ENCODE measurements at regions of chr4 and their contacts with region 1.

Region 1: GRCh38 chr4:140359562-140360427 is 13.7 kb upstream of the SCOC start:
- DNase-seq: peak; percentile 27
- ATAC-seq: peak; percentile 91
- H3K4me3 Mint-ChIP-seq: no peak overlapping the region
- H3K27ac Mint-ChIP-seq: no peak overlapping the region
- H3K4me1 Mint-ChIP-seq: no peaks in the 10 kb centered on the region
- H3K27me3 Mint-ChIP-seq: peaks cover 12% of the 10 kb centered on the region
- CTCF ChIP-seq: peak; percentile 93

Region 2: GRCh38 chr4:139484783-139485318 is 874.9 kb before region 1 on chr4:
- CTCF ChIA-PET with region 1: no interaction called
- POLR2A ChIA-PET with region 1: no interaction called
- intact Hi-C with region 1: no loop called
- DNase-seq: no peak
- ATAC-seq: no peak
- H3K4me3 Mint-ChIP-seq: no peak overlapping the region
- H3K27ac Mint-ChIP-seq: no peak overlapping the region
- H3K4me1 Mint-ChIP-seq: no peaks in the 10 kb centered on the region
- H3K27me3 Mint-ChIP-seq: no peaks in the 10 kb centered on the region
- CTCF ChIP-seq: no peak

Region 3: GRCh38 chr4:139734875-139735380 is 624.9 kb before region 1 on chr4:
- CTCF ChIA-PET with region 1: interaction called, 8 read pairs
- POLR2A ChIA-PET with region 1: no interaction called
- intact Hi-C with region 1: loop called (anchors 1 kb)
- DNase-seq: peak; percentile 66
- ATAC-seq: peak; percentile 87
- H3K4me3 Mint-ChIP-seq: peak overlapping the region; percentile 76
- H3K27ac Mint-ChIP-seq: no peak overlapping the region
- H3K4me1 Mint-ChIP-seq: peaks cover 15% of the 10 kb centered on the region
- H3K27me3 Mint-ChIP-seq: peaks cover 13% of the 10 kb centered on the region
- CTCF ChIP-seq: no peak

Region 4: GRCh38 chr4:140252742-140253555 is 106.8 kb before region 1 on chr4:
- CTCF ChIA-PET with region 1: interaction called, 10 read pairs
- POLR2A ChIA-PET with region 1: no interaction called
- intact Hi-C with region 1: no loop called
- DNase-seq: peak; percentile 67
- ATAC-seq: peak; percentile 83
- H3K4me3 Mint-ChIP-seq: peak overlapping the region; percentile 72
- H3K27ac Mint-ChIP-seq: no peak overlapping the region
- H3K4me1 Mint-ChIP-seq: peaks cover 8% of the 10 kb centered on the region
- H3K27me3 Mint-ChIP-seq: peaks cover 25% of the 10 kb centered on the region
- CTCF ChIP-seq: peak; percentile 82

Region 5: DNA sequence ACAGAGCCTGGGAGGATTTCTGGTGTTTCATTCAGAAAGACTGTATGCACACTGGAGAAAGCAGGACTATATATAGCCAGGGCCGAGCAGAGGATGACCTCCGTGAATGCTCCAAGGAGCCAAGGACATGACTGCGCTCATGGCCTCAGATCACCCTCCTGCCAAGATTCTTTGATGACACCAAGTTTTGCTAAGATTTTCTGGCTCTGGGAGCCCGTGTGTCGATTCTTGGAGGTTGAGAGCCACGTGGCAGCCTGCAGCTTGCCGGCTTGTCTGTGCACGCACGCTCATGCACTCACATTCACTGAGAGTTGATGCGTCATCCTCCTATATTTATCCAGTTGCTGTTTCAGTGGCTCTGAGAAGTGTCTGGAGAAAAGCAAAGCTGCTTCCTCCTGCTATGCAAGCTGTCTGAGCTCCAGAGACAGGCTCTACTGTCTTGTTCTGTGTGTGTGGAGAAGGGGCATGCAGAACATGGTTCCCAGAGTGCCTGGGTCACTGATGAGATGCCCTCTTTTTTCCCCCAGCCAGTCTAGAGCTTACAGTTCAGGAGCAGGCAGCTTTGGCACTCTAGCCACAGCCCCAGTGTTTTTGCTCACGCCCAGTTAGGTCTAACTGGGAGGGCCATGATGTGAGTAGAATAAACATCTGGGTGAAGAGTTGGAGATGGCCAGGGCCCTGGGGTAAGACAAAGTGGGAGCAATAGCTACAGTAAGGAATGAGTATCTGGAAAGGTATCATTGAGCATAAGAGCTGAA is 51.2 kb before region 1 on chr4:
- CTCF ChIA-PET with region 1: no interaction called
- POLR2A ChIA-PET with region 1: no interaction called
- intact Hi-C with region 1: no loop called
- DNase-seq: no peak
- ATAC-seq: no peak
- H3K4me3 Mint-ChIP-seq: no peak overlapping the region
- H3K27ac Mint-ChIP-seq: no peak overlapping the region
- H3K4me1 Mint-ChIP-seq: peaks cover 3% of the 10 kb centered on the region
- H3K27me3 Mint-ChIP-seq: peaks cover 4% of the 10 kb centered on the region
- CTCF ChIP-seq: no peak

Region 6: GRCh38 chr4:140427106-140427961 is 67.5 kb after region 1 on chr4 and contains the start of gene CLGN:
- CTCF ChIA-PET with region 1: interaction called, 9 read pairs
- POLR2A ChIA-PET with region 1: no interaction called
- intact Hi-C with region 1: loop called (anchors 2 kb)
- DNase-seq: peak; percentile 58
- ATAC-seq: peak; percentile 91
- H3K4me3 Mint-ChIP-seq: peak within 1 kb of the TSS; percentile 85
- H3K27ac Mint-ChIP-seq: no peak within 1 kb of the TSS
- H3K4me1 Mint-ChIP-seq: peaks cover 12% of the 10 kb centered on the region
- H3K27me3 Mint-ChIP-seq: peaks cover 48% of the 10 kb centered on the region
- CTCF ChIP-seq: no peak
- total RNA-seq, gene CLGN: not detected in 2 replicates

Region 7: DNA sequence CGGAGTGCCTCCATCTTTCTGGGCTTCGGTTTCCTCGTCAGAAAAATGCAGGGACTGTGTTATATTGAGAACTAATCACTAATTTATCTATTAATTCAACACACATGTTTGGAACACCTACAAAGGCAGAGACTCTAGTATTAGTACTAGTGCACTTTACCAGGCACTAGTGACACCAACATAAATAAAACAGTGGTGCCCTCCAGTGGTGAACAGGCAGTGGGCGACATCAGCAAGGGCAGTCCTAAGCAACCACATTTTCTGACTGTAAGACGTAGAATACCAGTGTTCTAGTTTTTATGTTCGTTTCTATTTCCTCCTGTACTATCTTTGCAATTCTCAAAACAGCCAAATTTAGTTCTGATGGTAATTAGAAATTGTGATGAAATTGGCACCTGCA is 278.0 kb after region 1 on chr4:
- CTCF ChIA-PET with region 1: interaction called, 13 read pairs
- POLR2A ChIA-PET with region 1: no interaction called
- intact Hi-C with region 1: loop called (anchors 1 kb)
- DNase-seq: no peak
- ATAC-seq: peak; percentile 70
- H3K4me3 Mint-ChIP-seq: no peak overlapping the region
- H3K27ac Mint-ChIP-seq: no peak overlapping the region
- H3K4me1 Mint-ChIP-seq: peaks cover 3% of the 10 kb centered on the region
- H3K27me3 Mint-ChIP-seq: no peaks in the 10 kb centered on the region
- CTCF ChIP-seq: no peak

Measured in activated B cell treated with CpG ODN at 0.5 μM for 24 hours (primary cell).